ENCODE measurements at regions of chr1 and their contacts with region 1.

Region 1: DNA sequence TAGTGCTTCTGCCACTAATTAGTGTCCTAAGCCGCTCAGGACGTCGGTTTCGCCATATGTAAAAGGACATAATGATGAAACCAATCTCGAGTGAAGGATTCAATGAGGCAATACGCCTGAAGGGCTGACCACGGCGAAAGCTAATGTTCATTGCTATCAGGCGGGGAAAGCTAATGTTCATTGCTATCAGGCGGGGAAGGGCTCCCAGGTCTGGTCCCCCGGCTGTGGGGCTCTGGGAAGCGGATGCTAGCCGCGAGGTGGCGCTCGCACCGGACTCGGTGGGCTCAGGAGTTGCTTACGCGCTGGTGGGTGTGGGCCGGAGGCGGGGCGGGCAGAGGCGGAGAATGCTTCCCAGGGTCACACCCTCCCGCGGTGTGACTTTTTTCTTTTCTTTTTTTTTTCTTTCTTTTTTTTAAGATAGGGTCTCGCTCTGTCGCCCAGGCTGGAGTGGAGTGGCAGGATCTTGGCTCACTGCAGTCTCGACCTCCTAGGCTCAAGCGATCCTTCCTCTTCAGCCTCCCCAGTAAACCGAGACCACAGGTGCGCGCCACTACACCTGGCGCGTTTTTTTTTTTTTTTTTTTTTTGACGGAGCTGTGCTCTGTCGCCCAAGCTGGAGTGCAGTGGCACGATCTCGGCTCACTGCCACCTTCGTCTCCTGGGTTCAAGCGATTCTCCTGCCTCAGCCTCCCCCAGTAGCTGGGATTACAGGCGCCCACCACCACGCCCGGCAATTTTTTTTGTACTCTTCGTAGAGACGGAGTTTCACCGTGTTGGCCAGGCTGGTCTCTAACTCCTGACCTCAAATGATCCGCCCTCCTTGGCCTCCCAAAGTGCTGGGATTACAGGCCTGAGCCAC is 1.1 kb upstream of the PEAR1 start:
- DNase-seq: peak; percentile 95
- ATAC-seq: peak; percentile 96
- H3K4me3 Mint-ChIP-seq: peak overlapping the region; percentile 35
- H3K27ac Mint-ChIP-seq: no peak overlapping the region
- H3K4me1 Mint-ChIP-seq: peaks cover 7% of the 10 kb centered on the region
- H3K27me3 Mint-ChIP-seq: peaks cover 49% of the 10 kb centered on the region
- CTCF ChIP-seq: peak; percentile 76

Region 2: DNA sequence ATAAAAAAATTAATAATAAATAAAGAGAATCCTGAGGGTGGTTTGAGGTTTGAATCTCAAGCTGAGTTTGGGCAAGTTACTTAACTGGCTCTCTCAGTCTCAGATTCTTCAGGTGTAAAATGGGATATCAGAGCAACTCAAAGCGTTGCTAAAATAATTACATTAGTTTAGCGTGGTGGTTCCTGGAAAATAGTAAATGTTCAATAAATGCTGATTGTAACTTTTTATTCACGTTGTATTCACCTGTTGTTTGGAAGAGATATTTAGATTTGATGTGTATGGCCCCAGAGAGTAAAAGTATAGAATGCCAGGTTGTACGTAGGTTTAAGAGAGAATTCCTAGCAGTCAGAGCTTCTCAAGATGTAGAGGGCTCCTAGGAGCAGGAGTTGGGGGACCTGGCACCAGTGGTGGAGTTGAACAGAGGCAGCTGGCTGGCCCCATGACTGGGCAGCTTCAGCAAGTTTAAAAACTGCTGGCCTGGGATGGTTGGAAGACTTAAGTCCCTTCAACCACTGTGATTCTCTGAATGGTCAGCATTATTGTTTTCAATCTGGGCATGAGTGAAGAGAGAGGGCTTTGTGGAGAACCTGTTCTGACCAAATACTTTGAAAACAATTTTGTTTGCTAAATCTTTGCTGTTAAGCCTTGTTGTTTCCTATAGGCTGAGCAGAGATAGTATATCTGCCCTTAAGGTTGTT is 102.6 kb before region 1 on chr1:
- CTCF ChIA-PET with region 1: interaction called, 10 read pairs
- POLR2A ChIA-PET with region 1: no interaction called
- intact Hi-C with region 1: no loop called
- DNase-seq: no peak
- ATAC-seq: no peak
- H3K4me3 Mint-ChIP-seq: no peak overlapping the region
- H3K27ac Mint-ChIP-seq: no peak overlapping the region
- H3K4me1 Mint-ChIP-seq: peaks cover 3% of the 10 kb centered on the region
- H3K27me3 Mint-ChIP-seq: no peaks in the 10 kb centered on the region
- CTCF ChIP-seq: no peak

Region 3: GRCh38 chr1:156821801-156822200 is 70.6 kb before region 1 on chr1:
- CTCF ChIA-PET with region 1: interaction called, 14 read pairs
- POLR2A ChIA-PET with region 1: interaction called, 3 read pairs
- intact Hi-C with region 1: no loop called
- DNase-seq: peak; percentile 85
- ATAC-seq: peak; percentile 84
- H3K4me3 Mint-ChIP-seq: no peak overlapping the region
- H3K27ac Mint-ChIP-seq: peak overlapping the region; percentile 65
- H3K4me1 Mint-ChIP-seq: peaks cover 45% of the 10 kb centered on the region
- H3K27me3 Mint-ChIP-seq: no peaks in the 10 kb centered on the region
- CTCF ChIP-seq: no peak

Region 4: GRCh38 chr1:156852418-156852874 is 40.0 kb before region 1 on chr1:
- CTCF ChIA-PET with region 1: interaction called, 25 read pairs
- POLR2A ChIA-PET with region 1: interaction called, 3 read pairs
- intact Hi-C with region 1: no loop called
- DNase-seq: no peak
- ATAC-seq: no peak
- H3K4me3 Mint-ChIP-seq: no peak overlapping the region
- H3K27ac Mint-ChIP-seq: no peak overlapping the region
- H3K4me1 Mint-ChIP-seq: peaks cover 21% of the 10 kb centered on the region
- H3K27me3 Mint-ChIP-seq: peaks cover 8% of the 10 kb centered on the region
- CTCF ChIP-seq: no peak

Region 5: GRCh38 chr1:156910309-156910782 is 17.9 kb after region 1 on chr1:
- CTCF ChIA-PET with region 1: interaction called, 13 read pairs
- POLR2A ChIA-PET with region 1: no interaction called
- intact Hi-C with region 1: no loop called
- DNase-seq: peak; percentile 76
- ATAC-seq: peak; percentile 83
- H3K4me3 Mint-ChIP-seq: no peak overlapping the region
- H3K27ac Mint-ChIP-seq: no peak overlapping the region
- H3K4me1 Mint-ChIP-seq: peaks cover 3% of the 10 kb centered on the region
- H3K27me3 Mint-ChIP-seq: peaks cover 13% of the 10 kb centered on the region
- CTCF ChIP-seq: peak; percentile 99

Region 6: DNA sequence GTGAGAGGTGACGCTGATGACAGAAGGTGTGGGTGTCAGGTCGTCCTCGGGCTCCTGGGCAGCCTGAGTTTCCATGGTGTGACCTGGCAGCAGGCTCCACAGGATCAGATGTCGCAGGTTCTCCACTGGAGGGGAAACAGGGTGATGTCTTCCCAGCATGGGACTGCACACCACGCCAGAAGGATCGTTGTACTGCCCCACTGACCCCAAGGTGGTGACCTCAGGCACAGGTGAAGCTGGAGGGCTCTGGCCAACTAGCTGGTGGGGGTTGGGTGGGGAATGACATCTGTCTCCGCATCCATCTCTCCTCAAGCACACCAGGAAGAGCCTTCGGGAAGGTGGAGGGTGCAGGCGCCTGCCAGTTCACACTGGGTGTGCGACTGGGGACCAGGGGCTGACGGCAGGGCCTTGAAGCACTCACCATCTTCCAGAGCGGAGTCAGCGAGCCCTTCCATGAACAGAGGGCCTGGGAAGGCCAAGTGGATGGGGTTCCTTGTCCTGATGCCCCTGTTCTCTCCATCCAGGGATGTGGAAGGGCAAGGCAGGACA is 47.4 kb after region 1 on chr1:
- CTCF ChIA-PET with region 1: no interaction called
- POLR2A ChIA-PET with region 1: no interaction called
- intact Hi-C with region 1: no loop called
- DNase-seq: no peak
- ATAC-seq: no peak
- H3K4me3 Mint-ChIP-seq: no peak overlapping the region
- H3K27ac Mint-ChIP-seq: no peak overlapping the region
- H3K4me1 Mint-ChIP-seq: no peaks in the 10 kb centered on the region
- H3K27me3 Mint-ChIP-seq: no peaks in the 10 kb centered on the region
- CTCF ChIP-seq: no peak

Region 7: DNA sequence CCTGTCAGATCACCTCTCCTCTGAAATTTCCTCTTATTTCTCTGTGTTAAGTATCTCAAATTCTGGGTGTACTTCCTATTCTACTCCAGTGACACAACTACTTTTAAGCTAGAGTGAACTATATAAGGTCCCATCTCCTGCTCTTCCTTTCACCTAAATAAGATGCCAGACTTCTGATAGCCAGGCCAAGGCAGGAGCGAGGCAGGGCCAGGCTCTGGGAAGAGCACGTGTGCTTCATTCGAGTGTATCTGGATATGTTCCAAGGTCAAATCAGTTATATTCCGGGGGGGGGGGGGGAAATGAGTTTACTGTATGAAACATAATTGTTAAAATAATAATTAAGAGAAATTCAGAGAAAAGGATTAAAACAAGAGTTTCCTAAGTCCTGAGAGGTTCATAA is 88.1 kb after region 1 on chr1:
- CTCF ChIA-PET with region 1: no interaction called
- POLR2A ChIA-PET with region 1: no interaction called
- intact Hi-C with region 1: no loop called
- DNase-seq: no peak
- ATAC-seq: no peak
- H3K4me3 Mint-ChIP-seq: no peak overlapping the region
- H3K27ac Mint-ChIP-seq: no peak overlapping the region
- H3K4me1 Mint-ChIP-seq: no peaks in the 10 kb centered on the region
- H3K27me3 Mint-ChIP-seq: peaks cover 7% of the 10 kb centered on the region
- CTCF ChIP-seq: no peak

Region 8: GRCh38 chr1:157117527-157118057 is 225.2 kb after region 1 on chr1:
- CTCF ChIA-PET with region 1: no interaction called
- POLR2A ChIA-PET with region 1: no interaction called
- intact Hi-C with region 1: no loop called
- DNase-seq: no peak
- ATAC-seq: no peak
- H3K4me3 Mint-ChIP-seq: no peak overlapping the region
- H3K27ac Mint-ChIP-seq: no peak overlapping the region
- H3K4me1 Mint-ChIP-seq: no peaks in the 10 kb centered on the region
- H3K27me3 Mint-ChIP-seq: no peaks in the 10 kb centered on the region
- CTCF ChIP-seq: no peak